ENCODE measurements at regions of chr14 and their contacts with region 1.

Region 1: GRCh38 chr14:73311708-73312030 is 74.4 kb downstream of the PAPLN start:
- DNase-seq: no peak
- ATAC-seq: peak; percentile 37; the same call in 1 of the 2 replicates
- H3K4me3 ChIP-seq: no peak overlapping the region
- H3K27ac ChIP-seq: peak overlapping the region; percentile 8; the same call in 1 of the 2 replicates
- H3K4me1 ChIP-seq: peaks cover 19% of the 10 kb centered on the region
- H3K27me3 ChIP-seq: no peaks in the 10 kb centered on the region
- CTCF ChIP-seq: no peak

Region 2: DNA sequence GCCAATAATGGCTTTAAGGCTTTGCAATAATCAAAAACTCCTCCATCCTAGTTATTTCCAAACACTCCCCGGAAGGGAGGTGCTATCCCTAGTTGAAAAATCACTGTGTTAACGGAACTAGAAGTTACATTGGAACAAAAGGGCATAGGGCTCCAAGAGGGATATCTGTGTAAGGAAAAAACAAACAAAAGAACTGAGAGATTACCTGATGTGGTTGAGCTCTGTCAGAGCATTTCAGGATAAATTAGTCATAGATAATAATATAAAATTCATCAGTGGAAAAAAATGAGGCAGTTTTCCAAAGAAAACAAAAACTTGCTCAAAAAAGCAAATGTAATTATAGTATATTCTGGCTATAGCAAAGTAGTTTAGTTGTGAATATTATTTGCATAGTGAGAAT is 101.7 kb before region 1 on chr14:
- CTCF ChIA-PET with region 1: no interaction called
- POLR2A ChIA-PET with region 1: no interaction called
- intact Hi-C with region 1: loop called (anchors 1 kb)
- DNase-seq: peak; percentile 96
- ATAC-seq: peak; percentile 99
- H3K4me3 ChIP-seq: peak overlapping the region; percentile 15; the same call in 1 of the 2 replicates
- H3K27ac ChIP-seq: peak overlapping the region; percentile 86
- H3K4me1 ChIP-seq: peaks cover 28% of the 10 kb centered on the region
- H3K27me3 ChIP-seq: no peaks in the 10 kb centered on the region
- CTCF ChIP-seq: no peak

Region 3: GRCh38 chr14:73392329-73393257 is 80.9 kb after region 1 on chr14:
- CTCF ChIA-PET with region 1: no interaction called
- POLR2A ChIA-PET with region 1: interaction called, 3 read pairs
- intact Hi-C with region 1: loop called (anchors 5 kb)
- DNase-seq: no peak
- ATAC-seq: no peak
- H3K4me3 ChIP-seq: no peak overlapping the region
- H3K27ac ChIP-seq: no peak overlapping the region
- H3K4me1 ChIP-seq: peaks cover 7% of the 10 kb centered on the region; the same call in 1 of the 2 replicates
- H3K27me3 ChIP-seq: no peaks in the 10 kb centered on the region
- CTCF ChIP-seq: no peak

Region 4: GRCh38 chr14:73458151-73458976 is 146.7 kb after region 1 on chr14 and contains the start of gene NUMB:
- CTCF ChIA-PET with region 1: interaction called, 7 read pairs
- POLR2A ChIA-PET with region 1: interaction called, 4 read pairs
- intact Hi-C with region 1: loop called (anchors 5 kb)
- DNase-seq: peak; percentile 100
- ATAC-seq: peak; percentile 94
- H3K4me3 ChIP-seq: peak within 1 kb of the TSS; percentile 90
- H3K27ac ChIP-seq: peak within 1 kb of the TSS; percentile 11; the same call in 1 of the 2 replicates
- H3K4me1 ChIP-seq: peaks cover 37% of the 10 kb centered on the region
- H3K27me3 ChIP-seq: no peaks in the 10 kb centered on the region
- CTCF ChIP-seq: no peak
- total RNA-seq, gene NUMB: 22.2 and 26.8 TPM in 2 replicates

Measured in PC-3 (cell line).